Activated naive CD4-positive, alpha-beta T cell treated with anti-CD3 and anti-CD28 coated beads for 36 hours (primary cell): ENCODE measurements at regions of chr9 and their contacts with region 1.

Region 1: DNA sequence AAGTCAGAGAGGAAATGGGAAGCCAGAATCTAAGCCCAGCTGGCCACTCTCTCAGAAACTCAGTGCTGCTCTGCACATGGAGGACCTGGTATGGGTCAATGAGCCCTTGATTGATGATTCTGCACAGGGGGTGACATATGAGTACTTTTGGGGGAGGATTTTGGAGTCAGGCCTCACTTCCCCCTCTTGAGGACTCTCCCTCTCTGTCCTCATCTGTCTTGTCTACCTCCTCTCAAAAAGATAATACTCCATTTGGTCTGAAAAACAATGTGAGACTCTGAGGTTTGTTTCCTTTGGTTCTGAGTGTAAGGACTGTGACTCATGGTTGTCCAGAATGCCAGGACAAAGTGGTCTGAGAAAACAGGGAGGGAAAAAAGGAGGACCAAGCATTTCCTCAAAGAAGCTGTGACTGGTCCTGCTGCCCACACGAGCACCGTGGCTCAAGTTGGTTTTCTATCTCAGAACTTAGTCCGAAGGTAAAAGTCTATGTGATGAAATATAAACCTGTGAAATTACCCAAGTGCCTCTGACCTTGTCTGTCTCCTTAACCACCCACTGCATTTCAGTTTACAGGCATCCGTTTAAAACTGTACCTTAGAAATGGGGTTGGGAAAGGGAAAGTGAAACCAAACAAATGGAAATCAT is 11.1 kb downstream of the TTC39B start:
- DNase-seq: peak; percentile 40
- H3K4me3 Mint-ChIP-seq: peak overlapping the region; percentile 63
- H3K27ac Mint-ChIP-seq: peak overlapping the region; percentile 95
- H3K4me1 Mint-ChIP-seq: peaks cover 86% of the 10 kb centered on the region
- H3K27me3 Mint-ChIP-seq: no peaks in the 10 kb centered on the region

Region 2: DNA sequence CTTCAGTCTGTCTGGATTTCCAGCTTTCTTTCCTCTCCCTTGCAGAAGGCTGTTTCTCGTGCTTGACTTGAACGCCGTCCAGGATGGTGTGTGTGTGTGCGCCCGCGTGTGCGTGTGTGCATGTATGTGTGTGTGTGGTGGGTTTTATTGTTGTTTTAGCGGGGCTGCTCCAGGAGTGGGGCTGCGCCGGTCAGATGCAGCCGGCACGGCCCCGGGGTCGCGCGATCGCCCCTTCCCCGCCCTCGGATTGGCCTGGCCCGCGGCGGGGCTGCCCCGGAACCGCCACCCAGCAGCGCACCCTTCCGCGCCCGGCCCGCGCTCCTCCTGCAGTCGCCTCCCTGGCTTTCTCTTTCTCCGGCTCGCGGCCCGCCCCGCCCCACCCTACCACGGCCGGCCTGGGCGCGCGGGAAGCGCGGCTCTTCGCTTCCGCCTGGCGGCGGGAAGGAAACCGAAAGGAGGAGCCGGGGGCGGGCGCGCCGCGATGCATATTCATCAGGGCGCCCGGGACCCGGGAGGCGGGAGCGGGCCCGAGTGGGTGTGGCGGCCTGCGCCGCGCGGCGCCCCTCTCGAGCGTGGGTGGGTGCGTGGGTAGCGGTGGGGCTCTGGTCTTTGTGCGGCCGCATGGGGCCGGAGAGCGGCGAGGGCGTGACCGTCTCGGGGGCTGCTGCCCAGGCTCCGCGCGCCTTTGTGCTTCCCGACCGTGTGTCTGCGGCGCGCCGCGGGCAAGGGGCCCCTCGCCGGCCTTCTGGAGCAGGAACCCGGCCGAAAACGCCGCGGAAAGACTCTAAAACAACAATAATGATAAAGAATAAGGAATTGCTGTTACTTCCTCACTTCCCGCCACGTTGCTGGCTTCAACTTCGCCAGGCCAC is 973.4 kb before region 1 on chr9:
- CTCF ChIA-PET with region 1: no interaction called
- intact Hi-C with region 1: loop called (anchors 10 kb)
- DNase-seq: peak; percentile 82
- H3K4me3 Mint-ChIP-seq: peak overlapping the region; percentile 77
- H3K27ac Mint-ChIP-seq: no peak overlapping the region
- H3K4me1 Mint-ChIP-seq: peaks cover 8% of the 10 kb centered on the region
- H3K27me3 Mint-ChIP-seq: peaks cover 42% of the 10 kb centered on the region

Region 3: GRCh38 chr9:14441976-14442651 is 853.8 kb before region 1 on chr9:
- CTCF ChIA-PET with region 1: no interaction called
- intact Hi-C with region 1: no loop called
- DNase-seq: no peak
- H3K4me3 Mint-ChIP-seq: no peak overlapping the region
- H3K27ac Mint-ChIP-seq: no peak overlapping the region
- H3K4me1 Mint-ChIP-seq: no peaks in the 10 kb centered on the region
- H3K27me3 Mint-ChIP-seq: peaks cover 9% of the 10 kb centered on the region

Region 4: DNA sequence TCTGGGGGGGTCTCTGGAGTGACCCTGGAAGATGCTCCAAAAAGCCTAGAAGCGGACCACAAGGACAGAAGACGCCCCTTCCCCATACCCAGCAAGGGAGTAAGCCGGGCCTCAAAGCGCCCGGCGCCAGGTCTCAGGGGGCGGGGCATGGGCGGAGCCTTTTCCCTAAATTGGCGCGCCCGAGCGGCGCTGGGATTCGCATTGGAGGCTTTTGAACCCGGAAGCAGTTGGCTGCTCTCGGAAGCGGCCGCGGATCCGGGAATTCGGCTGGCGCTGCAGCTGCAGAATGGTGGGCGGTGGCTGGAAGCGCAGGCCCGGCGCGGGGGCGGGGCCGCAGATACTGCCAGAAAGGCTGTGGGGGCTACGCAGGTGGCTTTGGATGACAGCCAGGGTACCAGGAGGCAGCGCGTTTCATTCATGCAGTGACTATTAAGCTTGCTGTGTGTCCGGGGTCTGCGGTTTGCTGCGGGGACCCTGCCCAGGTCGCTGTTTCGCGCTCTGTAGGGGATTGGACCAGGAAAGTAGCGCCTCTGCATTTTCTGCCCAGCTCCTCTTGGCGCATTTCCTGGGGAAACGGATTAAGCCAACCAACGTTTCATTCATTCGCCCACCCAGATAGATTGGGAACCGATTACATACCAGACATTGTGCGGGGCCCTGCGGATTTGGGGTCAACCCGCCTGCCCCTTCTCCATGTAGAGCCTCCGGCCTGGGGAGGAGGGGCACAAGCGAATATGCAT is 302.7 kb before region 1 on chr9:
- CTCF ChIA-PET with region 1: no interaction called
- intact Hi-C with region 1: loop called (anchors 5 kb)
- DNase-seq: peak; percentile 76
- H3K4me3 Mint-ChIP-seq: peak overlapping the region; percentile 76
- H3K27ac Mint-ChIP-seq: peak overlapping the region; percentile 74
- H3K4me1 Mint-ChIP-seq: peaks cover 30% of the 10 kb centered on the region
- H3K27me3 Mint-ChIP-seq: no peaks in the 10 kb centered on the region

Region 5: DNA sequence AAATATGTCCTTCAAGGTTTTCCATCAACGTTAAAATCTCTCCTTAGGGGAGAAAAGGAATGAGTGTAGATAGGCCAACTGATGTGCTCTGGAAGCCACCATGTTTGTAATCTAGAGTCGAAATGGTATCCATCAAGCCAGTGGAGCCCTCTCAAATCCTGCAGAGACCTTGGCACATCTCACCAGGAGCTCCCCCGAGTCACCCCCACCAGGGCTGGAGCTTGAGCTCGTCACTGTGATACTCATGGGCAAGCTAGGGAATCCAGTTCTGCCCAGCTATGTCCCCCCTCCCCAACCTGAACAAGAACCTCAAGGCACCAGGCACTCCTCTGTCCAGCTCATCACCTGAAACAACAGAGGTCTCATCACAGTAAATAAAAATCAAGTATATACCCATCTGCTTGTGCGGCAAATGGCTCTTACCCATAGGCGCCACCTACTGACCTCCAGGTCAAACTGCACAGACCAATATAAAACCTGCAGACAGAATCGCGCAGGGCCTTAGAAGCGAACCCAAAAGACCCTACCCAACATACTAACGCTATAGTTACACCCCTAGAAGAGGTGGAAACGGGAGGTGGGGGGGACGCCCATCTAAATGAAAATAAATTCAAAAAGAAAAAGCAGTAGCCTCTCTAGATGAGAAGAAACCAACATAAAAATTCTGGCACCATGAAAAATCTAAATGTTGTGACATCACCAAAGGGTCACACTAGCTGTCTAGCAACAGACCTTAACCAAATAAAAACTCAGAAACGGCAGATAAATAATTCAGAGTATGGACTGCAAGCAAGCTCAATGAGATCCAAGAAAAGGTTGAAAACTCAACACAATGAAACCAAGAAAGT is 63.9 kb before region 1 on chr9:
- CTCF ChIA-PET with region 1: interaction called, 3 read pairs
- intact Hi-C with region 1: loop called (anchors 1 kb)
- DNase-seq: peak; percentile 25
- H3K4me3 Mint-ChIP-seq: no peak overlapping the region
- H3K27ac Mint-ChIP-seq: no peak overlapping the region
- H3K4me1 Mint-ChIP-seq: peaks cover 47% of the 10 kb centered on the region
- H3K27me3 Mint-ChIP-seq: no peaks in the 10 kb centered on the region

Region 6: DNA sequence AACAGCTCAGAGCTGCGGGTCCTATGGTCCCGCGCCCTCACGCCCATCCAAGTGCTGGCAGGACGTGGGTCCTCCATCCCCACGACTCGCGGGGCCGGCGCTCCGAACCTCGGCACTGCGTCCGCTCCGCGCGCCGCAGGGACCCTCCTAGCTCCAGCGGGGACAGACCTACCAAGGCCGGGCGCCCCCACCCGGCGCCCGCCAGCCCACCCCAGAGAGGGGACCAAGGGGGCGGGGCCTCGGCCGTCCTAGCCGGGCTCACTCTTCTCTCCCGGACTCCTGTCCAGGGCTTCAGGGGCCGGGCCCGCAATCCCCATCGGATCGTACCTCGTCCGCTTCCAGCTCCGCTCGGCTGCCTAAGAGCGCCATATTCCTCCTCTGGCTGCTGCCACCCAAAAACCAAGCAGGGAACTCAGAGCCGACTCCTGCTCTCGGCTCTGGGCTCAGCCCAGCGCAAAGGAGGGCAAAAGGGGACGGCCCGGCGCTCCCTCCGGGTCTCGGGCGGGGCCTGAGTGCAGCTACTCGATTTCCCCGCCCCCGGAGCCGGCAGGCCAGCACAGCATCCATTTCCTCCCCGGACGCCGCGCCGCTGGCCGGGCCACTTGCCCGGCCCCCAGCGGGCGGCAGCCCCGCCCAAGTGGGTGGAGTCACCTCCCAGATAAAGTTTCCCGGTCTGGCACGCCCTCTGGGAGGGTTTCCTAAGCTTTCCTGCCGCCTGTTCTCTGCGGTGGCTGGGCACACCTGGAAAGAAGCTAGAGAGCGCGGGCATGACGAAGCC is 11.1 kb after region 1 on chr9 and contains the start of gene TTC39B:
- CTCF ChIA-PET with region 1: interaction called, 5 read pairs
- intact Hi-C with region 1: loop called (anchors 1 kb)
- DNase-seq: peak; percentile 86
- H3K4me3 Mint-ChIP-seq: peak within 1 kb of the TSS; percentile 99
- H3K27ac Mint-ChIP-seq: peak within 1 kb of the TSS; percentile 95
- H3K4me1 Mint-ChIP-seq: peaks cover 57% of the 10 kb centered on the region
- H3K27me3 Mint-ChIP-seq: no peaks in the 10 kb centered on the region
- total RNA-seq, gene TTC39B: 43.9 to 46.4 TPM

Region 7: GRCh38 chr9:15357050-15357653 is 61.3 kb after region 1 on chr9:
- CTCF ChIA-PET with region 1: no interaction called
- intact Hi-C with region 1: no loop called
- DNase-seq: peak; percentile 62
- H3K4me3 Mint-ChIP-seq: no peak overlapping the region
- H3K27ac Mint-ChIP-seq: no peak overlapping the region
- H3K4me1 Mint-ChIP-seq: peaks cover 9% of the 10 kb centered on the region
- H3K27me3 Mint-ChIP-seq: no peaks in the 10 kb centered on the region

Region 8: DNA sequence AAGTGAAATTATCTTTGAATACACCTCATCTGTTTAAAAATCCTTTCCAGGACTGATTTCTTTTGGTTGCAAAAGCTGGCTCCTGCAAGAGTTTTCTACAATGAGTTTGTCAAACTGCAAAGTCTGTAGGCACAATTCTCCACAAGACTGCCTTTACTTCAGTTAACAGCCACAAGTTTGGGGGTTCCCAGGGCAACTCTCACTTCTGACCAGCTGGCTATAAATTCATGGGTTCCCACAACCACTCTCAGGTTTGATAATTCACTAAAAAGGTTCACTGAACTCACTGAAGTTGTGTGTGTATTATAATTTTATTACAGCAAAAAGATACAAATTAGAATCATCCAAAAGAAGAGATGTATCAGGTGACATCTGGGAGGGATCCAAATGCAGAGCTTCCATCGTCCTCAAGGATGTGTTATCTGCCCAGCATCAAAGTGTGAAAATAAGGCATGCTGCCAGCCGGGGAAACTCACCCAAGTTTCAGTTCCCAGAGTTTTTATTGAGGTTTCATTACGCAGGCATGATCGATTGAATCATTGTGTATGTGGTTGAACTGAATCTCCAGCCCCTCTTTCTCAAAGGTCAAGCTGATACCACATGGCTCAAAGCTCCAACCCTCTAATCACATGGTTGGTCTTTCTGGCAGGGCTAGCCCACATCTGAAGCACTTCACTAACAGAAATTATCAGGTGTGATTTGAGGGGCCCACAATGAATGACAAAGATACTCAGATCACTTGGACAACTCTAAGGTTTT is 233.9 kb after region 1 on chr9:
- CTCF ChIA-PET with region 1: no interaction called
- intact Hi-C with region 1: loop called (anchors 5 kb)
- DNase-seq: no peak
- H3K4me3 Mint-ChIP-seq: no peak overlapping the region
- H3K27ac Mint-ChIP-seq: no peak overlapping the region
- H3K4me1 Mint-ChIP-seq: peaks cover 11% of the 10 kb centered on the region
- H3K27me3 Mint-ChIP-seq: no peaks in the 10 kb centered on the region